Transverse colon (tissue), 4 donors: ENCODE measurements at regions of chr15 and their contacts with region 1.

Region 1: DNA sequence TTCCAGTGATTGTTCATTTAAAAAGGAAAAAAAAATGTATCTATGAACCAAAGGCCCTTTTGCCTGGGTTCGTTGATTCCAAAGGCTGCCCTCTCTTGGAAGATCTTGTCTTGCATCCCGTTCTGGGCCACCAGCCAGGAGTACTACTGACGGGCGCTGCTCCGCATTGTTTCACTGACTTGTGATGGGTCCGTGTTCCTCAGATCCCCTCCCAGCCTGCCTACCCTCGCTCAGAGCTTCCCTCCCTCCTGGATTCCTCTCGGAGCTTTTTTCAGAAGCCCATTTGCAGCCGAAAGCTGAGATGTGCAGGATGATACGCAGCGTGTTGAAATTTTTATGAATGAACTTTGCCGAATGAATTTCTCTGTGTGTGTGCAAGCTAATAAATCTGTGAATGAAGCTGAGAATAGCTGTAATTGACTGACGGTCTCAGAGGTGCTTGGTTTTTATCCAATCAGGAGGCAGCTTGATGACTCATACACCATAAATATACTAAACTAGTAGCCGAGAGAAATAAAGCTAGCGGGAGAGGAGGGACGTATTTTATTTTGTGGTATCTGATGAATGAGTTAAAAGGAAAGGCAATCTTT is at the start of gene SHC4:
- DNase-seq: peak; percentile 34
- H3K4me3 ChIP-seq: peak within 1 kb of the TSS; percentile 26 to 47 (median 36)
- H3K27ac ChIP-seq: peak within 1 kb of the TSS in 2 of 4 donors; percentile 30 to 41
- H3K4me1 ChIP-seq: peaks cover 7 to 21% (median 18%) of the 10 kb centered on the region in 4 donors
- H3K27me3 ChIP-seq: peaks cover 35% of the 10 kb centered on the region
- CTCF ChIP-seq: no peak
- EP300 ChIP-seq: no peak
- POLR2A ChIP-seq: no peak
- total RNA-seq, gene SHC4: 0.48 to 0.96 TPM in 2 of 4 donors, not detected in the others

Region 2: DNA sequence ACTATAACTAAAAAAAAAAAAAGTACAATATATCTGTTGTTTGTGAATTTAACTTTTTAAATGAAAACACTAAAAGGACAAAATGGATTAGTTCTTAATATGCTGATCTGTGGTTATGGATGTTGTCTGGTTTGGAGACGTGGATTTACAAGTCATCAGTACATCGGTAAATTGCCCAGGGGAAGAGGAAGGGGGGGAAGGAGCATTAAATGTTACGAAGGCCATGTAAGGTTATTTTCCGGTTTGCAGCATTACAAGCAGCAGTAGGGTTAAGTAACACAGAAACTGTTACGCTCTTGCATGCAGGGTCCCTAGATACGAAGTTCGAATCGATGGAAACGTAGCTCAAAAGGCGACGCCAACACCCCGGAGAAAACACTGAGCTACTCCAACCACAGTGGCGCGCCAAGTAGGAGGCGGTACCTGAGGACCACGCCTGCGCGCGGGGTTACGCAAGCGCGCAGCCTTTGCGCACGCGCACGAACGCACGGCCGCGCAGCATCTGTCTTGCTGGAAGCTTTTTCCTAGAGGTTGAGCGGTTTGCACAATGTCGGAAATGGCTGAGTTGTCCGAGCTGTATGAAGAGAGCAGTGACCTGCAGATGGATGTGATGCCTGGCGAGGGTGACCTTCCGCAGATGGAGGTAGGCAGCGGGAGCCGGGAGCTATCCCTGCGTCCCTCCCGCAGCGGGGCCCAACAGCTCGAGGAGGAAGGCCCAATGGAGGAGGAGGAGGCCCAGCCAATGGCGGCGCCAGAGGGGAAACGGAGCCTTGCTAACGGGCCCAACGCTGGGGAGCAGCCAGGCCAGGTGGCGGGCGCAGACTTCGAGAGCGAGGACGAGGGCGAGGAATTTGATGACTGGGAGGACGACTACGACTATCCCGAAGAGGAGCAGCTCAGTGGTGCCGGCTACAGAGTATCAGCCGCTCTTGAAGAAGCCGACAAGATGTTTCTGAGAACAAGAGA is 85.7 kb before region 1 on chr15 and contains the start of gene EID1:
- in situ Hi-C with region 1: no loop called
- intact Hi-C with region 1: loop called (anchors 10 kb)
- DNase-seq: peak; percentile 94
- H3K4me3 ChIP-seq: peak within 1 kb of the TSS; percentile 55 to 96 (median 68)
- H3K27ac ChIP-seq: peak within 1 kb of the TSS; percentile 88 to 94 (median 92)
- H3K4me1 ChIP-seq: peaks cover 0 to 29% (median 11%) of the 10 kb centered on the region in 4 donors
- H3K27me3 ChIP-seq: no peaks in the 10 kb centered on the region
- CTCF ChIP-seq: peak in 1 of 5 experiments; percentile 8
- EP300 ChIP-seq: no peak
- POLR2A ChIP-seq: peak; percentile 63
- total RNA-seq, gene EID1: 44.5 to 136 (median 101) TPM